ENCODE measurements at regions of chr2 and their contacts with region 1.

Region 1: GRCh38 chr2:86079981-86080911 is 25.4 kb downstream of the POLR1A start:
- DNase-seq: peak; percentile 69 to 92 (median 82)
- ATAC-seq: peak; percentile 87 to 96 (median 94)
- H3K4me3 ChIP-seq: no peak overlapping the region
- H3K27ac ChIP-seq: no peak overlapping the region
- H3K4me1 ChIP-seq: peaks cover 0 to 3% (median 0%) of the 10 kb centered on the region in 3 donors
- H3K27me3 ChIP-seq: no peaks in the 10 kb centered on the region
- CTCF ChIP-seq: peak; percentile 57 to 78 (median 70)

Region 2: GRCh38 chr2:85826990-85827878 is 253.0 kb before region 1 on chr2:
- intact Hi-C with region 1: loop called (anchors 2 to 10 kb)
- DNase-seq: peak; percentile 50 to 89 (median 76)
- ATAC-seq: peak; percentile 93 to 99 (median 99)
- H3K4me3 ChIP-seq: no peak overlapping the region
- H3K27ac ChIP-seq: no peak overlapping the region
- H3K4me1 ChIP-seq: no peaks in the 10 kb centered on the region
- H3K27me3 ChIP-seq: no peaks in the 10 kb centered on the region
- CTCF ChIP-seq: peak; percentile 65 to 90 (median 86)

Region 3: DNA sequence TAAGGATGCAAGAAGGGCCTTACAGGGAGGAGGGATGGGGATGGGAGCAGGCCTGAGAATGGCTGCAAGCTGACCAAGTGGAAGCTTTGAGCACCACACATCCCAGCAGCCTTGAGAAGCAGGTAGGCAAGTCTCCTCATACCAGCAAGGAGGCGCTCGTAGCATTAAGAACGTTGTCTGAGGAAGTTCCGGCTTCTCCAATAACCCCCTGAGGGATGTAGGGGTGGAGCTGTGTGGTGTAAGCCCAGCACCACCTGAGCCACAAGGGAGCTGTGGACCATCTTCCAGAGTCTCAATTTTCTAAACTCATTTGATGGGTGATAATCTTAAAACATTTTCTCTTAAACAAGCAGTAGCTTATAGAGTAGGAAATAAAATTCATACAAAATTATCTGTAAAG is 242.1 kb before region 1 on chr2:
- intact Hi-C with region 1: loop called in 1 of 3 experiments (anchors 5 kb)
- DNase-seq: peak in 1 of 6 donors; percentile 2
- ATAC-seq: no peak
- H3K4me3 ChIP-seq: no peak overlapping the region
- H3K27ac ChIP-seq: no peak overlapping the region
- H3K4me1 ChIP-seq: no peaks in the 10 kb centered on the region
- H3K27me3 ChIP-seq: no peaks in the 10 kb centered on the region
- CTCF ChIP-seq: no peak

Region 4: GRCh38 chr2:85873679-85874078 is 206.6 kb before region 1 on chr2:
- intact Hi-C with region 1: no loop called
- DNase-seq: no peak
- ATAC-seq: no peak
- H3K4me3 ChIP-seq: no peak overlapping the region
- H3K27ac ChIP-seq: no peak overlapping the region
- H3K4me1 ChIP-seq: peaks cover 8 to 22% (median 12%) of the 10 kb centered on the region in 3 donors
- H3K27me3 ChIP-seq: no peaks in the 10 kb centered on the region
- CTCF ChIP-seq: no peak

Region 5: GRCh38 chr2:85888684-85889626 is 191.3 kb before region 1 on chr2 and contains the start of gene ST3GAL5:
- intact Hi-C with region 1: loop called in 1 of 3 experiments (anchors 10 kb)
- DNase-seq: peak; percentile 84 to 96 (median 90)
- ATAC-seq: peak; percentile 86 to 90 (median 87)
- H3K4me3 ChIP-seq: peak within 1 kb of the TSS; percentile 66 to 98 (median 92)
- H3K27ac ChIP-seq: peak within 1 kb of the TSS; percentile 43 to 86 (median 78)
- H3K4me1 ChIP-seq: peaks cover 0 to 15% (median 4%) of the 10 kb centered on the region in 3 donors
- H3K27me3 ChIP-seq: no peaks in the 10 kb centered on the region
- CTCF ChIP-seq: peak; percentile 23 to 46 (median 42)
- total RNA-seq, gene ST3GAL5: 4.4 to 11.4 (median 5.4) TPM

Region 6: DNA sequence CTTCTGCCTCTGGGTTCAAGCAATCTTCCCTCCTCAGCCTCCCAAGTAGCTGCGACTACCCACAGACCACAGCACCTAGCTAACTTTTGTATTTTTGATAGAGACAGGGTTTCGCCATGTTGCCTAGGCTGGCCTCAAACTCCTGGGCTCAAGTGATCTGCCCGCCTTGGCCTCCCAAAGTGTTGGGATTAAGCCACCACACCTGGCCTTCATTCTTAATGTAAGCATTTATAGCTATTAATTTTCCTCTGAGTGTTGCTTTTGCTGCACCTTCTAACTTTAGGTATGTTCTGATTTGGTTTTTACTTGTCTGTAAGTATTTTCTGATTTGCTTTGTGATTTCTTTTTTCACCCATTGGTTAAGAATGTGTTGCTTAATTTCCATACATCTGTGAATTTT is 453.3 kb after region 1 on chr2:
- intact Hi-C with region 1: no loop called
- DNase-seq: no peak
- ATAC-seq: no peak
- H3K4me3 ChIP-seq: no peak overlapping the region
- H3K27ac ChIP-seq: no peak overlapping the region
- H3K4me1 ChIP-seq: no peaks in the 10 kb centered on the region
- H3K27me3 ChIP-seq: no peaks in the 10 kb centered on the region
- CTCF ChIP-seq: no peak